WTC11 (cell line): ENCODE measurements at regions of chr1 and their contacts with region 1.

Region 1: DNA sequence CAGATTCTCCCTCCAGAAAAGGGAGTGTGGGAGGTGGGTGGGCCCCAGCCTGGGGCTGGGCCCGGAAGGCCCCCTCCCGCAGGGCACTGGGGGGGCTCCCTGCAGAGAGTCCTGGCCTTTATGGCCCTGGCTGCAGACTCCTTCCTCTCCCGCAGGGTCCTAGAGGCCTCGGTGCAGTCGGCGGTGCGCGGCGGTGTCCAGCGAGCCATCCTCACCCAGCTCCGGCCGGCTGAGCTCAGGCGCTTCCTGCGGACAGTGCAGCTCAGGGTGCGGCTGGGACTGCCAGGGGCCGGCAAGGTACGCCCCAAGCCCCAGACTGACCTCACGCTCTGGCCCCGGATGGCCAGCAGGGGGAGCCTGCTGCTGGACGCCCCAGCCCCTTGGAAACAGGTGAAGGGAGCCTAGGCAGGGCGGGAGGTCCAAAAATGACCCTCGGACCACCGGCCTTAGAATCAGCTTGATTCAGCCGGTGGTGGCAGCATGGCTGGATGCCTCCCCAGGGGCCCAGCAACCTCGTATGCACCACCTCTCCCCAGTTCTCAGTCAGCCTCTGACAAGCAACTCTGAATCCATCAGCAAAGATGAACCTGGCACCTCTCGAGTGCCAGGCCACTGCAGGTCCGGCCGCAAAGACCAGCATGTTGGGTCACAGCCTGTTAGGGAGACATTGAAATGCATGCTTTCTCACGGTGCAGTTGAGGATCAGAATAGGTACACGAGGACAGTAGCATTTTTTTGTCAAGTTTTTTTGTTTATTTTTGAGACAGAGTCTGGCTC is 20.6 kb downstream of the MTHFR start:
- DNase-seq: peak; percentile 92
- ATAC-seq: peak; percentile 88
- H3K4me3 Mint-ChIP-seq: peak overlapping the region; percentile 30; the same call in 1 of the 2 replicates
- H3K27ac Mint-ChIP-seq: peak overlapping the region; percentile 70; the same call in 1 of the 2 replicates
- H3K4me1 Mint-ChIP-seq: peaks cover 32% of the 10 kb centered on the region
- H3K27me3 Mint-ChIP-seq: no peaks in the 10 kb centered on the region
- CTCF ChIP-seq: peak; percentile 88

Region 2: DNA sequence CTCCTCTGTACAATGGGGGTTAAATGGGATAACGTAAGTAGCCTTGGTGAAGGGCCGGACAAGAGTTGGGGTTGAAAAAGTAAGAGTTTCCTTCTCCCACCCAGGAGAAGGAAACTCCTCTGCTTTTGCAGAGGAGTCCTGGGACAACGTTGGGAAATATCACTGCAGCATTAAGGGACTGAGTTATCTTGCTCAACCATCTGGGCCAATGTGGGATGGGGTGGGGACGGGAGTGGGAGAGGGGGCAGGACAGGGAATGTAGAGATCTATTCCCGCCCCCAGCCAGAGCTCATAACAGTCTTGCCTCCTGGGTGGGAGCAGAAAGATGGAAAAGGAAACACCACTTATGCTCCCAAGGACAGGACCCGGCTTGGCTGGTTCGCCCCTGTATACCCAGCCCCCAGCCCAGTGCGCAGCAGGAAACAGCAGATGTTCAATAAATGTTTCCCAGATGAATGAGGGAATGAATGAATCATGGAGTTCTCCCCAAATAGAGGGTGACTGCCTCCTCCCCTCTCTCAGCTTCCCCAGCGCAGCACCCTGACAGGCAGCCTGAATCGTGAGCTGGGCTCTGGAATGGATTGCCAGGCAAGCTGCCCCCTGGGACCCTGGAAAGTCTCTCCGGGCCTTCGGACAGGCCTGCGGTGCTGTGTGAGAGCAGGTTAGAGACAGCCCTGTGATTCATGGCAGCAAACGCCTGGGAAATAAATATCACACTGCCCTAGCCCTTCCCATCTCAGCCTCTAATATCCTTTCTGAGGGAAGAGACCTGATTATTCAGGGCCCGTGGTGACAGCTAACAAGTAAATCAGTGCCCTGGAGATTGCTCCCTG is 155.8 kb before region 1 on chr1:
- CTCF ChIA-PET with region 1: no interaction called
- POLR2A ChIA-PET with region 1: no interaction called
- DNase-seq: no peak
- ATAC-seq: no peak
- H3K4me3 Mint-ChIP-seq: no peak overlapping the region
- H3K27ac Mint-ChIP-seq: no peak overlapping the region
- H3K4me1 Mint-ChIP-seq: no peaks in the 10 kb centered on the region
- H3K27me3 Mint-ChIP-seq: no peaks in the 10 kb centered on the region
- CTCF ChIP-seq: no peak

Region 3: GRCh38 chr1:11661103-11661502 is 124.1 kb before region 1 on chr1:
- CTCF ChIA-PET with region 1: interaction called, 10 read pairs
- POLR2A ChIA-PET with region 1: no interaction called
- DNase-seq: no peak
- ATAC-seq: no peak
- H3K4me3 Mint-ChIP-seq: no peak overlapping the region
- H3K27ac Mint-ChIP-seq: no peak overlapping the region
- H3K4me1 Mint-ChIP-seq: no peaks in the 10 kb centered on the region
- H3K27me3 Mint-ChIP-seq: no peaks in the 10 kb centered on the region; the same call in 1 of the 2 replicates
- CTCF ChIP-seq: no peak

Region 4: DNA sequence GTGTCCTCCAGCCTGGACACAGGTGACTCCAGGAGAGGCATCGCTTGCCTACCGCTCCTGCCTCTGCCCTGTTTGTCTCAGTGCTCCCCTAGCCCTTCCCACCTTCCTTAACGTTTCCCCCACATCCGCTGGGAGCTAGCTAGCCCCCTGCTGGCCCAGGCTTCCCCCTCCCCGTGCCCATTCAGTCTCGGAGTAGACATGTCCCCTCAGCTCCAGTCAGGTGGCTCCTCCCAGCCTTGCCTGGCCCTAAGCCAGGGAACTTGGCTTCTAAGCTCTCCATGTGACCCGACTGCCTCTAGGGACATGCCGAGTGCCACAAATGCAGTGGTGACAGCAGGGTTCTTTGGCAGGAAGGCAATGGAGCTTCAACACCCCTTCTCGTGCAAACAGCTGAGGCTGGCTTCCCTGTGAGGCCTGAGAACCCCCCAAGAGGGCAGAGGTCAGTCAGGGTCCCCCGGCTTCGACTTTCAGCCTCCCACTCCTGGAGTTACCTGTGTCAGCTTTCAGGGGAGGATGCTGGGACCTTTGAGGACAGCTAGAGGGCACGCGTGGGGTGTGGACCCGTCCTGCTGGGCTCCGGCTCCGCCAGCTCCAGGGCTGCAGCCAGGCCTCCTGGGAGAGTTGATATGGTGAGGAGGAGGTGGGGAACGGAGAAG is 77.4 kb before region 1 on chr1:
- CTCF ChIA-PET with region 1: interaction called, 10 read pairs
- POLR2A ChIA-PET with region 1: no interaction called
- DNase-seq: no peak
- ATAC-seq: peak; percentile 19
- H3K4me3 Mint-ChIP-seq: no peak overlapping the region
- H3K27ac Mint-ChIP-seq: peak overlapping the region; percentile 25; the same call in 1 of the 2 replicates
- H3K4me1 Mint-ChIP-seq: peaks cover 48% of the 10 kb centered on the region
- H3K27me3 Mint-ChIP-seq: no peaks in the 10 kb centered on the region
- CTCF ChIP-seq: no peak

Region 5: DNA sequence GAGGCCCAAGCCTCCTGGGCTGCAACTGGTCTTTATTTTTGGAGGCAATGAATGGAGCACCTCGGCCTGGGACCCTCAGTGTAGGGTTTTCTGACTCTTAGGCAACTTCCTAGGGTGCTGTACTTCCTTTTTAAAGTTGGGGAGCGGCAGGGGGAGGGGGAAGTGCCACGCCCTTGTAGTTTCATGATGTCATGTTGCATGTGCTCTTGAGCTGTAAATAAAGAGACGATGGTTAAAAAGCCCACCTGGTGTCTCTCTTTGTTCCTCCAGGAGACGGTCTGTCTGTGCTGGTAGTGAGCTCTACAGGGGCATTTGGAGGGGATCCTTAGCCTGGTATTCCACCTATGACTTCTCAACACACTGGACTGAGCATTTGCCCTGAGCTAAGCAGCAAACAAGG is 59.6 kb before region 1 on chr1:
- CTCF ChIA-PET with region 1: interaction called, 10 read pairs
- POLR2A ChIA-PET with region 1: no interaction called
- DNase-seq: no peak
- ATAC-seq: peak; percentile 37
- H3K4me3 Mint-ChIP-seq: no peak overlapping the region
- H3K27ac Mint-ChIP-seq: peak overlapping the region; percentile 29
- H3K4me1 Mint-ChIP-seq: peaks cover 37% of the 10 kb centered on the region
- H3K27me3 Mint-ChIP-seq: no peaks in the 10 kb centered on the region
- CTCF ChIP-seq: no peak

Region 6: GRCh38 chr1:11749203-11749689 is 35.9 kb before region 1 on chr1:
- CTCF ChIA-PET with region 1: interaction called, 10 read pairs
- POLR2A ChIA-PET with region 1: no interaction called
- DNase-seq: peak; percentile 60
- ATAC-seq: peak; percentile 88
- H3K4me3 Mint-ChIP-seq: no peak overlapping the region
- H3K27ac Mint-ChIP-seq: peak overlapping the region; percentile 61; the same call in 1 of the 2 replicates
- H3K4me1 Mint-ChIP-seq: peaks cover 30% of the 10 kb centered on the region
- H3K27me3 Mint-ChIP-seq: no peaks in the 10 kb centered on the region
- CTCF ChIP-seq: no peak

Region 7: GRCh38 chr1:11772458-11772857 is 12.7 kb before region 1 on chr1:
- CTCF ChIA-PET with region 1: interaction called, 16 read pairs
- POLR2A ChIA-PET with region 1: interaction called, 3 read pairs
- DNase-seq: no peak
- ATAC-seq: peak; percentile 49
- H3K4me3 Mint-ChIP-seq: no peak overlapping the region
- H3K27ac Mint-ChIP-seq: no peak overlapping the region
- H3K4me1 Mint-ChIP-seq: peaks cover 3% of the 10 kb centered on the region; the same call in 1 of the 2 replicates
- H3K27me3 Mint-ChIP-seq: no peaks in the 10 kb centered on the region
- CTCF ChIP-seq: no peak

Region 8: GRCh38 chr1:11805447-11806306 is 20.5 kb after region 1 on chr1 and contains the starts of genes CLCN6 and MTHFR:
- CTCF ChIA-PET with region 1: interaction called, 98 read pairs
- POLR2A ChIA-PET with region 1: interaction called, 11 read pairs
- DNase-seq: peak; percentile 100
- ATAC-seq: peak; percentile 83
- H3K4me3 Mint-ChIP-seq: peak within 1 kb of the TSS; percentile 99
- H3K27ac Mint-ChIP-seq: peak within 1 kb of the TSS; percentile 99
- H3K4me1 Mint-ChIP-seq: peaks cover 57% of the 10 kb centered on the region
- H3K27me3 Mint-ChIP-seq: no peaks in the 10 kb centered on the region
- CTCF ChIP-seq: no peak
- total RNA-seq, gene CLCN6: 20.0 to 22.3 TPM (median 20.8 TPM) in 3 replicates
- total RNA-seq, gene MTHFR: 19.4 to 23.4 TPM (median 22.6 TPM) in 3 replicates